ENCODE measurements at regions of chr7 and their contacts with region 1.

Region 1: DNA sequence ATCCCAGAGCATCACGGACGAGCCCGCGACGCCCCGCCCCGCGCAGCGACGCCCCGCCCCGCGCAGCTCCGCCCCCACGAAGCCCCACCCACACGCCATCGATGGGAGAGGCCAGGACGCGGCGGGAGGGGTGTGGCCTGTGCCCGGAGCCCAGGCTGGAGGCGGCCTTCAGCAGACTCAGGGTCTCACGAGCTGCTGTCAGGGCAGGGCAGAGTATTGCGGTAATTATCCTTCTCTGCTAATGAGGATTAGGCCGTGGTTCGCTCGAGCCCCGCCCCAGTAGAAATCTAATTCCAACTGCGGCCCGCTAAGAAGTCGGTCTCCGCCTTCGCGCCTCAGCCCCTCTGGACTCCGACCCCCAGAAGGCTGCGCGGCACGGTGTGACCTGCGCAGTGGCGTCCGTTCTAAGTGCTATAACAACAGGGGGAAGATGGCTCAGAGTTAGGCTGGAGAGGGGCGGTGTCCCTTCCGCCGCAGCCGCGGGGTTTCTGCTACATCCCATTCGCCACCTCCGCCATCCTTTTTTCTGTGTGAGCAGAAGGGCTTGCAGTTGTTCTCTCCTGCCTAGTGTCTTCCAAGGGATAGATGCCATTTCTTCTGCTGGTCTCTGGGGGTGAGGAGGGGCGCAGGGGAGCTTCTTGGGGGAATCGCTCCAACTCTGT is 337 bp upstream of the NT5C3A start:
- DNase-seq: peak; percentile 83 to 98 (median 90)
- ATAC-seq: peak; percentile 90
- H3K4me3 ChIP-seq: peak overlapping the region; percentile 72
- H3K4me3 Mint-ChIP-seq: peak overlapping the region; percentile 98
- H3K27ac ChIP-seq: peak overlapping the region; percentile 75 to 89
- H3K27ac Mint-ChIP-seq: peak overlapping the region; percentile 95
- H3K4me1 ChIP-seq: peaks cover 25% of the 10 kb centered on the region
- H3K4me1 Mint-ChIP-seq: peaks cover 48% of the 10 kb centered on the region
- H3K27me3 ChIP-seq: no peaks in the 10 kb centered on the region
- H3K27me3 Mint-ChIP-seq: no peaks in the 10 kb centered on the region
- CTCF ChIP-seq: no peak

Region 2: GRCh38 chr7:33040803-33041516 is 22.0 kb before region 1 on chr7:
- CTCF ChIA-PET with region 1: interaction called, 5 read pairs
- POLR2A ChIA-PET with region 1: interaction called, 41 read pairs
- intact Hi-C with region 1: loop called in 1 of 2 experiments (anchors 1 kb)
- DNase-seq: peak; percentile 44 to 90 (median 58)
- ATAC-seq: peak; percentile 99
- H3K4me3 ChIP-seq: peak overlapping the region; percentile 45
- H3K4me3 Mint-ChIP-seq: peak overlapping the region; percentile 89
- H3K27ac ChIP-seq: peak overlapping the region; percentile 56 to 75
- H3K27ac Mint-ChIP-seq: peak overlapping the region; percentile 98
- H3K4me1 ChIP-seq: peaks cover 5% of the 10 kb centered on the region
- H3K4me1 Mint-ChIP-seq: peaks cover 70% of the 10 kb centered on the region
- H3K27me3 ChIP-seq: no peaks in the 10 kb centered on the region
- H3K27me3 Mint-ChIP-seq: no peaks in the 10 kb centered on the region
- CTCF ChIP-seq: no peak

Region 3: DNA sequence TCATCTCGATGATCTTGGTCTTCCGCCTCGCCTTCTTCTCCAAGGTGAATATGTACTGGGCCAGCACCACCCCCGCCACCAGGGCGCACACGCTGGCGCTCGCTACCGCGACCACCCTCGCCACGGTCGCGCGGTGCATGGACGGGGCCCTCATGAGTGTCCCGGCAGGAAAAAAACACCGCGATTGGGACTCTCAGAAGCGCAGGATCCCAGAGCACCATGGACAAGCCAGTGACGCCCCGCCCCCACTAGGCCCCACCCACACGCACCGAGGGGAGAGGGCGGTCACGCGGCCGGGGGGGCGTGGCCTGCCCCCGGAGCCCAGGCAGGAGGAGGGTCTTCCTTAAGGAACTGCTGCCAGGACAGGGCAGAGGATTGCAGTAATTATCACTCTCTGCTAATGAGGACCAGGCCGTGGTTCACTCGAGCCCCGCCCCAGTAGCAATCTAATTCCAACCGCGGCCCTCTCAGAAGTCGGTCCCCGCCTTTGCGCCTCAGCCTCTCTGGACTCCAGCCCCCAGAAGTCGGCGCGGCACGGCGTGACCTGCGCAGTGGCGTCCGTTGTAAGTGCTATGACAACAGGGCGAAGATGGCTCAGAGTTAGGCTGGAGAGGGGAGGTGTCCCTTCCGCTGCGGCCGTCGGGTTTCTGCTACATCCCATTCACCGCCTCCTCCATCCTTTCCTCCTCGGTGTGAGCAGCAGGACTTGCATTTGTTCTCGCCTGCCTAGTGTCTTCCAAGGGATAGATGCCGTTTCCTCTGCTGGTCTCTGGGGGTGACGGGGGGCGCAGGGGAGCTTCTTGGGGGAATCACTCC is 66.3 kb after region 1 on chr7 and contains the start of gene BBS9:
- CTCF ChIA-PET with region 1: no interaction called
- POLR2A ChIA-PET with region 1: interaction called, 4 read pairs
- intact Hi-C with region 1: loop called (anchors 1 to 5 kb)
- DNase-seq: peak; percentile 79 to 95 (median 87)
- ATAC-seq: peak; percentile 95
- H3K4me3 ChIP-seq: peak within 1 kb of the TSS; percentile 63
- H3K4me3 Mint-ChIP-seq: peak within 1 kb of the TSS; percentile 96
- H3K27ac ChIP-seq: peak within 1 kb of the TSS; percentile 54 to 79
- H3K27ac Mint-ChIP-seq: peak within 1 kb of the TSS; percentile 92
- H3K4me1 ChIP-seq: peaks cover 4% of the 10 kb centered on the region
- H3K4me1 Mint-ChIP-seq: peaks cover 34% of the 10 kb centered on the region
- H3K27me3 ChIP-seq: no peaks in the 10 kb centered on the region
- H3K27me3 Mint-ChIP-seq: peaks cover 4% of the 10 kb centered on the region
- CTCF ChIP-seq: no peak
- total RNA-seq, gene BBS9: 16.0 to 20.4 TPM

Measured in CD4-positive, alpha-beta T cell (primary cell).